Right cardiac atrium (tissue), 5 donors: ENCODE measurements at regions of chr9 and their contacts with region 1.

Region 1: DNA sequence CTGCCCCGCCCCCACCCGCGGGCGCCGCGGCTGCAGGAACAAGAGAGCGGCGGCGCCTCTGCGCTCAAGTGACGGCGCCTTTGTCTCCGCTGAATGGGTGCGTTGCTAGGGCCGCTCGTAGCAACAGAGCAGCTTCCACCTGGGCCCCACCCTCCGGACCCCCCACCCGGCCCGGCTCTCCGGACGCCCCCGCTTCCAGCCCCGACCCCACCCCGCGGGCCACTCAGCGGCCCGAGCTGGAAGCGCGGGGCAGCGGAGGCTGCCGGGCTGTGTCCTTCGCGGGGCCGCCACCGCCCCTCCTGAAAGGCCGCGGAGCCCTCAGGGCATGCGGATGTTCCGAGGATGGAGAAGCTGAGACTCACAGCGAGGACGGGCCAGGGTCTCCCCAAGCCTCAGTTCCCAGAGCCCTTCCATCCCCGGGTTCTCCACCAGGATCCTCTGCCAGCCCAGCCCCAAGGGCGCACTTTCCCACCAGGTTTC is 27.6 kb downstream of the ADGRD2 start:
- DNase-seq: peak in 1 of 3 donors; percentile 49
- ATAC-seq: no peak
- H3K4me3 ChIP-seq: peak overlapping the region; percentile 32
- H3K27ac ChIP-seq: no peak overlapping the region
- H3K4me1 ChIP-seq: no peaks in the 10 kb centered on the region
- H3K27me3 ChIP-seq: no peaks in the 10 kb centered on the region

Region 2: GRCh38 chr9:123863164-123863855 is 614.5 kb before region 1 on chr9:
- intact Hi-C with region 1: no loop called
- DNase-seq: no peak
- ATAC-seq: peak; percentile 39 to 67
- H3K4me3 ChIP-seq: no peak overlapping the region
- H3K27ac ChIP-seq: no peak overlapping the region
- H3K4me1 ChIP-seq: peaks cover 7% of the 10 kb centered on the region
- H3K27me3 ChIP-seq: no peaks in the 10 kb centered on the region

Region 3: GRCh38 chr9:124420991-124421543 is 56.8 kb before region 1 on chr9:
- intact Hi-C with region 1: loop called in 1 of 4 experiments (anchors 5 kb)
- DNase-seq: no peak
- ATAC-seq: no peak
- H3K4me3 ChIP-seq: no peak overlapping the region
- H3K27ac ChIP-seq: no peak overlapping the region
- H3K4me1 ChIP-seq: no peaks in the 10 kb centered on the region
- H3K27me3 ChIP-seq: no peaks in the 10 kb centered on the region